ENCODE measurements at regions of chr19 and their contacts with region 1.

Region 1: DNA sequence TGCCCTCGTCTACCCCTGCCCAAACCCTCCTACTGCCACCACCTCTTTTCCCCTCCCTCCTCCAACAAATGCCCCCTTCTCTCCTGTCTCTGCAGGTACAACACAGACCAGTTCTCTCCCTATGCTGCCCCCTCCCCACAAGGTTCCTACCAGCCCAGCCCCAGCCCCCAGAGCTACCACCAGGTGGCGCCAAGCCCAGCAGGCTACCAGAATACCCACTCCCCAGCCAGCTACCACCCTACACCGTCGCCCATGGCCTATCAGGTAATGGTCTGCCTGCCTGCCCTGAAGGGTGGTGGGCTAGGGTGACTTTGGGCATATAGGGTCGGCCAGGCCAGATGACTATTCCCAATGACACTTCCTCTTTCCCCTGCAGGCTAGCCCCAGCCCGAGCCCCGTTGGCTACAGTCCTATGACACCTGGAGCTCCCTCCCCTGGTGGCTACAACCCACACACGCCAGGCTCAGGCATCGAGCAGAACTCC is 6.5 kb upstream of the TIMM50 start:
- DNase-seq: no peak
- H3K4me3 ChIP-seq: no peak overlapping the region
- H3K27ac ChIP-seq: no peak overlapping the region
- H3K27me3 ChIP-seq: no peaks in the 10 kb centered on the region
- CTCF ChIP-seq: peak; percentile 83

Region 2: GRCh38 chr19:39463403-39463802 is 10.8 kb before region 1 on chr19:
- CTCF ChIA-PET with region 1: interaction called, 14 read pairs
- POLR2A ChIA-PET with region 1: interaction called, 6 read pairs
- DNase-seq: no peak
- H3K4me3 ChIP-seq: no peak overlapping the region
- H3K27ac ChIP-seq: no peak overlapping the region
- H3K27me3 ChIP-seq: no peaks in the 10 kb centered on the region
- CTCF ChIP-seq: no peak

Region 3: DNA sequence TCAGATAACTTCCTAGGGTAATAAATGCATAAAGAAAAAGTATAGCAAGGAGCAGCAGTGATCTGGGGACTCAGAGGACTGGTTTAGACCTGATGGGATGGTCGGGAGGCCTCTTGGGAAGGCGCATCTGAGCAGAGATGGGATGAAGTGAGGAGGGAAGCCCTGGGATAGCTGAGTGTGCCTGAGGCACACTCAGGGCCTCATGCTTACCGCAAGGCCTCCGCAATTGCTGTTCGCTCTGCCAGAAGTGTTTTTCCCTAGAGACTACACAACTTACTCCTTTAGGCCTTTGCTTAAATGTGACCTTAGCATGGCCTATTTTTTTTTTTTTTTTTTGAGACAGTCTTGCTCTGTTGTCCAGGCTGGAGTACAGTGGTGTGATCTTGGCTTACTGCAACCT is 20.5 kb after region 1 on chr19:
- CTCF ChIA-PET with region 1: interaction called, 10 read pairs
- POLR2A ChIA-PET with region 1: no interaction called
- DNase-seq: no peak
- H3K4me3 ChIP-seq: no peak overlapping the region
- H3K27ac ChIP-seq: no peak overlapping the region
- H3K27me3 ChIP-seq: peaks cover 21% of the 10 kb centered on the region
- CTCF ChIP-seq: no peak

Region 4: DNA sequence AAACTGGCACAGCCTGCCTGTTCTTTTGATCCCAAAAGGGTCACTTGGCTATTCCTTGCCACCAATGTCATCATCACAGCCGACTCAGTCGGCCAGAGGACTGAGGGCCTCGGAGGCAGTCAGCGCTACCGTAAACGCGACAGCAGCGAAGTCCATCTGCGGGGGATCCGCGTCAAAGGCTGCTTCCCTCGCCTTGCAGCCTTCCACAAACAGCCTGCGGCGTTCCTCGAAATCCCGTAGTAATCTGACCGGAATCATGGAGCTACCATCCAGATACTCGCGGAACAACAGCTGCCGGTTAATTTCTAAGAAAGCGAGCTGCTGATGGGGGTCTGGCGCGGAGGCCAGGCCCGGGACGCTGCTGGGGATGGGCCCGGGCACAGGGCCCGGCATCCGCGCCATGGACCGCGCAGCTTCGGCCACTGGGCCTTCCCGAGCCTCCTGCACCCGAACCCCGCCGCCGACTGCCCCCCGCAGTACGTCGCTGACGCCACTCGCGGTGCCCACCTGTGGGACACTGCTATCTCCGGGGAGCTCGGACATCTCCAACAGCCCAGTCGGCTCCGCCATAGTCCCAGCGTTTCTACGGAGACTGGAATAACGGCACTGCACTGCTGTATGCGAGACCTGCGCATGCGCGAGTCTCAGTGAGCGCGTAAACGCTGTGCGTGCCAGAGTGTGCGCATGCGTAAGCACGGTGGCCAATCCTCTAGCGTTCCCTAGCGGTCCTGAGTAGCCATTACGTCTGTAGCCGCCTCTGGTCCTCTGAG is 58.2 kb after region 1 on chr19 and contains the start of gene EID2B:
- CTCF ChIA-PET with region 1: interaction called, 31 read pairs
- POLR2A ChIA-PET with region 1: no interaction called
- DNase-seq: peak; percentile 95
- H3K4me3 ChIP-seq: peak within 1 kb of the TSS; percentile 95
- H3K27ac ChIP-seq: peak within 1 kb of the TSS; percentile 52
- H3K27me3 ChIP-seq: no peaks in the 10 kb centered on the region
- CTCF ChIP-seq: peak; percentile 98
- polyA plus RNA-seq, gene EID2B: 2.3 and 3.1 TPM in 2 replicates

Region 5: DNA sequence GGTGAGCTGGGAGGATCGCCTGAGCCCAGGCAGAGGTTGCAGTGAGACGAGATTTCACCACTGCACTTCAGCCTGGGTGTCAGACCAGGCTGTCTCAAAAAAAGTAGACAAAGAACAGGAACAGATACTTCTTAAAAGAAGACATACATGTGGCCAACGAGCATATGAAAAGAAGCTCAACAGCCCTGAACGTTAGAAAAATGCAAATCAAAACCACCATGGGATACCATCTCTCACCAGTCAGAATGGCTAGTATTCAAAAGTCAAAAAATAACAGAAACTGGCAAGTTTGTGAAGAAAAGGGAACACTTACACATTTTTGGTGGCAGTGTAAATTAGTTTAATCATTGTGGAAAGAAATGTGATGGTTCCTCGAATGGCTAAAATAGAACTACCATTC is 227.1 kb after region 1 on chr19:
- CTCF ChIA-PET with region 1: no interaction called
- POLR2A ChIA-PET with region 1: no interaction called
- DNase-seq: no peak
- H3K4me3 ChIP-seq: no peak overlapping the region
- H3K27ac ChIP-seq: no peak overlapping the region
- H3K27me3 ChIP-seq: peaks cover 2% of the 10 kb centered on the region
- CTCF ChIP-seq: no peak